ENCODE measurements at regions of chr7 and their contacts with region 1.

Region 1: DNA sequence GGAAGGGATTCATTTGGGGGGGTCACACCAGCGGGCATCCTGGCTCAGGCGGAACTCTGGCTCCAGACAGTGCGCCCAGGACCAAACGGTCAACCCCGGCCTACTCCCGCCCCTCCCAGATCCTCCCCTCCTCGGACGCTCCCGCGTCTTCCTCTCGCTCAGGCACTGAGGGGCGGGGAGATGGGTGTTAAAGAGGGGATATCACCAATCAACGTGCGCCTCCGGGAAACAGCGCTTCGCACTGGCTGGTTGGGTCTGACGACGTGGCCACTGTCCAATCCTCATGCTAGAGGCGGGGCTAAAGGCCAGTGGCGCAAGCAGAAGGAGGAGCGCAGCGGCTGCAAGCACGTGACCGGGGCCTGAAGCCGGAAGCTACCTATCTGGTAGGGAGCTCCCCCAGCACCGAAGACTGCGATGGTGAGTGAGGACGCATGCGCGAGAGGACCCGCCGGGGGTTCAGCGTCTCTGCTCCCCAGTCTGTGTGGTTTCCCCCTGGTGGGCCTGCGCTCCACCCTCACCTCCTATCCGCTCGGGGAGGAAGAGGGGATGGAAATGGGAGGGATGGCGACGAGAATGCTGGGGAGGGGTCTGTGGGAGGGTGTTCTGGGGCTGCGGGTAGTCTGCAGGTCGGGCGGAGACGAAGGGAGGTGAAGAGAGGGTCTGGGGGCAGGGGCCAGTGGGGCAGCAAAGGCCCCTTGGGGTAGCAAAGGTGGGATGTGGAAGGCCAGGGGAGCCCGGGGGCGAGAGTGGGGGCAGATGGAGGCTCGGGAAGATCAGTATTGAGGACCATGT is at the start of gene LAMTOR4:
- DNase-seq: peak; percentile 95 to 99
- H3K4me3 ChIP-seq: peak within 1 kb of the TSS; percentile 97
- H3K27ac ChIP-seq: no peak within 1 kb of the TSS
- H3K4me1 ChIP-seq: peaks cover 36% of the 10 kb centered on the region
- H3K27me3 ChIP-seq: no peaks in the 10 kb centered on the region
- CTCF ChIP-seq: no peak
- total RNA-seq, gene LAMTOR4: 160 and 285 TPM in 2 replicates

Region 2: GRCh38 chr7:99472561-99473243 is 676.1 kb before region 1 on chr7 and contains the start of gene ZNF789:
- CTCF ChIA-PET with region 1: no interaction called
- POLR2A ChIA-PET with region 1: interaction called, 10 read pairs
- intact Hi-C with region 1: no loop called
- DNase-seq: peak; percentile 91 to 99
- H3K4me3 ChIP-seq: peak within 1 kb of the TSS; percentile 76
- H3K27ac ChIP-seq: peak within 1 kb of the TSS; percentile 89
- H3K4me1 ChIP-seq: peaks cover 10% of the 10 kb centered on the region
- H3K27me3 ChIP-seq: no peaks in the 10 kb centered on the region
- CTCF ChIP-seq: no peak
- total RNA-seq, gene ZNF789: 30.8 and 38.8 TPM in 2 replicates

Region 3: GRCh38 chr7:100137851-100138760 is 10.6 kb before region 1 on chr7:
- CTCF ChIA-PET with region 1: interaction called, 15 read pairs
- POLR2A ChIA-PET with region 1: interaction called, 21 read pairs
- intact Hi-C with region 1: no loop called
- DNase-seq: peak; percentile 55 to 98
- H3K4me3 ChIP-seq: no peak overlapping the region
- H3K27ac ChIP-seq: peak overlapping the region; percentile 61
- H3K4me1 ChIP-seq: peaks cover 43% of the 10 kb centered on the region
- H3K27me3 ChIP-seq: no peaks in the 10 kb centered on the region
- CTCF ChIP-seq: no peak

Region 4: GRCh38 chr7:101436857-101437576 is 1288.3 kb after region 1 on chr7:
- CTCF ChIA-PET with region 1: no interaction called
- POLR2A ChIA-PET with region 1: interaction called, 12 read pairs
- intact Hi-C with region 1: no loop called
- DNase-seq: peak in 1 of 2 experiments; percentile 35
- H3K4me3 ChIP-seq: no peak overlapping the region
- H3K27ac ChIP-seq: no peak overlapping the region
- H3K4me1 ChIP-seq: peaks cover 4% of the 10 kb centered on the region
- H3K27me3 ChIP-seq: peaks cover 33% of the 10 kb centered on the region
- CTCF ChIP-seq: no peak